Natural killer cell (primary cell): ENCODE measurements at regions of chr20 and their contacts with region 1.

Region 1: GRCh38 chr20:35541783-35542588 is at the start of gene ERGIC3:
- DNase-seq: peak; percentile 96 to 98
- ATAC-seq: peak; percentile 95 to 99 (median 96)
- H3K4me3 ChIP-seq: peak within 1 kb of the TSS; percentile 95
- H3K4me3 Mint-ChIP-seq: peak within 1 kb of the TSS; percentile 92
- H3K27ac ChIP-seq: peak within 1 kb of the TSS; percentile 89
- H3K27ac Mint-ChIP-seq: peak within 1 kb of the TSS; percentile 77 to 92
- H3K4me1 ChIP-seq: peaks cover 16% of the 10 kb centered on the region
- H3K4me1 Mint-ChIP-seq: peaks cover 9 to 15% of the 10 kb centered on the region in 2 donors
- H3K27me3 ChIP-seq: no peaks in the 10 kb centered on the region
- H3K27me3 Mint-ChIP-seq: no peaks in the 10 kb centered on the region
- CTCF ChIP-seq: no peak
- total RNA-seq, gene ERGIC3: 128 to 130 (median 129) TPM

Region 2: DNA sequence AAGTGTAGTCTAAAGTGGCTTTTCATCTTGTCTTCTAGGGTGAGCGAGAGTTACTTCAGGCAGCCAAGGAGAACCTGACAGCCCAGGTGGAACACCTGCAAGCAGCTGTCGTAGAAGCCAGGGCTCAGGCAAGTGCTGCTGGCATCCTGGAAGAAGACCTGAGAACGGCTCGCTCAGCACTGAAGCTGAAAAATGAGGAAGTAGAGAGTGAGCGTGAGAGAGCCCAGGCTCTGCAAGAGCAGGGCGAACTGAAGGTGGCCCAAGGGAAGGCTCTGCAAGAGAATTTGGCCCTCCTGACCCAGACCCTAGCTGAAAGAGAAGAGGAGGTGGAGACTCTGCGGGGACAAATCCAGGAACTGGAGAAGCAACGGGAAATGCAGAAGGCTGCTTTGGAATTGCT is 39.6 kb before region 1 on chr20:
- intact Hi-C with region 1: no loop called
- DNase-seq: no peak
- ATAC-seq: no peak
- H3K4me3 ChIP-seq: no peak overlapping the region
- H3K4me3 Mint-ChIP-seq: no peak overlapping the region
- H3K27ac ChIP-seq: no peak overlapping the region
- H3K27ac Mint-ChIP-seq: peak overlapping the region; percentile 71 to 74
- H3K4me1 ChIP-seq: peaks cover 21% of the 10 kb centered on the region
- H3K4me1 Mint-ChIP-seq: peaks cover 62 to 66% of the 10 kb centered on the region in 2 donors
- H3K27me3 ChIP-seq: no peaks in the 10 kb centered on the region
- H3K27me3 Mint-ChIP-seq: no peaks in the 10 kb centered on the region
- CTCF ChIP-seq: no peak

Region 3: GRCh38 chr20:35664544-35665221 is 122.7 kb after region 1 on chr20 and contains the starts of genes CPNE1 and RBM12:
- intact Hi-C with region 1: loop called (anchors 2 kb)
- DNase-seq: peak; percentile 93 to 98
- ATAC-seq: peak; percentile 68 to 87 (median 80)
- H3K4me3 ChIP-seq: peak within 1 kb of the TSS; percentile 81
- H3K4me3 Mint-ChIP-seq: peak within 1 kb of the TSS; percentile 96
- H3K27ac ChIP-seq: peak within 1 kb of the TSS; percentile 97
- H3K27ac Mint-ChIP-seq: peak within 1 kb of the TSS in 1 of 2 donors; percentile 100
- H3K4me1 ChIP-seq: peaks cover 22% of the 10 kb centered on the region
- H3K4me1 Mint-ChIP-seq: peaks cover 55% of the 10 kb centered on the region in 2 donors
- H3K27me3 ChIP-seq: no peaks in the 10 kb centered on the region
- H3K27me3 Mint-ChIP-seq: no peaks in the 10 kb centered on the region
- CTCF ChIP-seq: no peak
- total RNA-seq, gene CPNE1: 298 to 342 (median 334) TPM
- total RNA-seq, gene RBM12: 80.9 to 112 (median 89.4) TPM

Region 4: GRCh38 chr20:35750611-35751010 is 208.6 kb after region 1 on chr20:
- intact Hi-C with region 1: no loop called
- DNase-seq: no peak
- ATAC-seq: no peak
- H3K4me3 ChIP-seq: no peak overlapping the region
- H3K4me3 Mint-ChIP-seq: no peak overlapping the region
- H3K27ac ChIP-seq: no peak overlapping the region
- H3K27ac Mint-ChIP-seq: no peak overlapping the region
- H3K4me1 ChIP-seq: no peaks in the 10 kb centered on the region
- H3K4me1 Mint-ChIP-seq: no peaks in the 10 kb centered on the region
- H3K27me3 ChIP-seq: no peaks in the 10 kb centered on the region
- H3K27me3 Mint-ChIP-seq: no peaks in the 10 kb centered on the region
- CTCF ChIP-seq: no peak